Sigmoid colon (tissue), 7 donors: ENCODE measurements at regions of chr16 and their contacts with region 1.

Region 1: DNA sequence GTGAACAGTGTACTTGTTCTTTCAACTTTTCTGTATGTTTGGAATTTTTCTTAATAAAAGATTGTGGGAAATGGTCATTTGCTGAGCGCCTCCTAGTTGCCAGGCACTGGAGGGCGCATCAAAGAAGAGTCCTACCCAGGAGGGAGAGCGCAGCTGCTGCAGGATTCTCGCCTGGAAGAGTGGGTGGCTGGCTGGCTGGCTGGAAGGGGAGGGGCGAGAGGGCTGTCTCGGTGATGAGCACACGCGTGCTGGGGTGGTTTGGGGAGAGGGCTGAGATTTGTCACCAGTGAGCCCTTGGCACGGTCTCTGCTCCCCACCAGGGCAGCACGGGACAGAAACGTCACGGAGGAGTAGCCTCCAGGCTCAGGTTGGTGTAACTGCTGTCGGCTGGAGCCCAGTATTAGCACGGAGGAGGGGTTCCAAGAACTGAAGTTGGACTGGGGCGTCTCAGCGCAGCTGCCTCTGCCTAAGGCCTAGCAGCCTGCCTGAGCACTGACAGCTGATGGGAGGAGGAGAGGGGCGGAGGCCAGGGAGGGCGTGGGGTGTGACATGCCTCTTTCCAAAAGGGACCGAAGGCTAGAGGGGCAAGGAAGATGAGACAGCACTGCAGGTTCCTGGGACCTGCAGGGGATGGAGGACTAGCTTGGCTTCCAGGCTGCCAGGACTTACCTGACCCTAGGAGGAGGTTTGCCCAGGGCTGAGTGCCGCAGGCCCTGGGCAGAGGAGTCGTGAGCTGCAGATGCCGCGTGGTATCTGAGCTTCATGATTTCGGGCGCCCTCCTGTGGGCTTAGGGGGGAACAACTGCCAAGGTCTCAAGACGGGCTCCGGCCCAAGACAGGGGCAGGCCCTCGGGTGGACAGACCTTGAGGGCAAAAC is 5.7 kb downstream of the LDHD start:
- DNase-seq: peak; percentile 96
- H3K4me3 ChIP-seq: peak overlapping the region in 3 of 4 donors; percentile 19 to 37 (median 36)
- H3K27ac ChIP-seq: peak overlapping the region; percentile 77 to 92 (median 88)
- H3K4me1 ChIP-seq: peaks cover 0 to 78% (median 64%) of the 10 kb centered on the region in 4 donors
- H3K27me3 ChIP-seq: no peaks in the 10 kb centered on the region
- CTCF ChIP-seq: peak; percentile 86 to 93 (median 89)
- EP300 ChIP-seq: peak in 1 of 4 donors; percentile 14
- POLR2A ChIP-seq: no peak

Region 2: GRCh38 chr16:74606521-74607310 is 504.2 kb before region 1 on chr16 and contains the start of gene GLG1:
- intact Hi-C with region 1: loop called (anchors 10 kb)
- DNase-seq: peak; percentile 94
- H3K4me3 ChIP-seq: peak within 1 kb of the TSS; percentile 77 to 99 (median 84)
- H3K27ac ChIP-seq: peak within 1 kb of the TSS; percentile 93 to 99 (median 96)
- H3K4me1 ChIP-seq: peaks cover 0 to 36% (median 33%) of the 10 kb centered on the region in 4 donors
- H3K27me3 ChIP-seq: no peaks in the 10 kb centered on the region
- CTCF ChIP-seq: no peak
- EP300 ChIP-seq: no peak
- POLR2A ChIP-seq: peak; percentile 80 to 86
- total RNA-seq, gene GLG1: 78.7 to 138 (median 98.3) TPM

Region 3: DNA sequence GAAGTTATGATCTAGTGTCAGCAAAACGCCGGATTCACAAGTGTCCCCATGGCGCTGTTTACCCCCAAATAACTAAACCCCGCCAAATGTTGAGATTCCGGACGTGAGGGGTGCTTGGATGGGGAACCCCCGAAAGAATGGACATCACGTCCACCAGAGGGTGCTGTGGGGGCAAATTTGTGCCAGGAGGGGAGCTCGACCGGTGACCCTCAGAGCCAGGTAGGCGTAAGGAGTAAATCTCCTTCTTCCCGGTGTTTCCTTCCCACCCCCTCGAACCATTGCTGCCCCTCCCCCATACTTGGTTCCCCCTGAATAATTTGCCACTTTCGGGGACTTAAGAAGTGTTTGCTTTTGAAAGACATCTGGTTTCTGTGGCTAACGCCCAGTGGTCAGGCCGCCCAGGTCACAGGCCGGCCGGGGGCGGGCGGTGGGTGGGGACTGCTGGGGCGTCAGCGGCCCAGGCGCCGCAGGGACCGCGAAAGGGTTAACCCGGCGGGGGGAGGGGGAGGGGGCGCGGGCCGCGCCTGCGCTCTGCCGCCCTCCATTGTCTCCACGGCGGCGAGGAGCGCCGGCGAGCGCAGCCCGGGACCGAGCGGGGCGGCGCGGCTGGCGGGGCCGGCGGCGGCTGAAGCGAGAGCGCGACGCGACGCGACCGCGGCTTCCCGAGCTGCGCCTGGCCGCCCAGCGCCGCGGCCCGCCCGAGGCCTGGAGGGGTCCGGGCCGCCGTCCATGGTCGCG is 112.2 kb before region 1 on chr16 and contains the start of gene ZNRF1:
- intact Hi-C with region 1: loop called (anchors 1 kb)
- DNase-seq: peak; percentile 92
- H3K4me3 ChIP-seq: peak within 1 kb of the TSS; percentile 84 to 99 (median 93)
- H3K27ac ChIP-seq: peak within 1 kb of the TSS; percentile 84 to 93 (median 92)
- H3K4me1 ChIP-seq: peaks cover 0 to 43% (median 21%) of the 10 kb centered on the region in 4 donors
- H3K27me3 ChIP-seq: no peaks in the 10 kb centered on the region
- CTCF ChIP-seq: peak; percentile 77 to 93 (median 86)
- EP300 ChIP-seq: no peak
- POLR2A ChIP-seq: no peak
- total RNA-seq, gene ZNRF1: 16.9 to 33.0 (median 22.3) TPM

Region 4: GRCh38 chr16:75043175-75043895 is 67.5 kb before region 1 on chr16:
- intact Hi-C with region 1: loop called (anchors 10 kb)
- DNase-seq: no peak
- H3K4me3 ChIP-seq: no peak overlapping the region
- H3K27ac ChIP-seq: peak overlapping the region; percentile 64 to 78 (median 70)
- H3K4me1 ChIP-seq: peaks cover 0 to 62% (median 53%) of the 10 kb centered on the region in 4 donors
- H3K27me3 ChIP-seq: no peaks in the 10 kb centered on the region
- CTCF ChIP-seq: no peak
- EP300 ChIP-seq: no peak
- POLR2A ChIP-seq: no peak

Region 5: GRCh38 chr16:75432828-75433731 is 322.2 kb after region 1 on chr16 and contains the start of gene CFDP1:
- intact Hi-C with region 1: loop called (anchors 1 kb)
- DNase-seq: peak; percentile 98
- H3K4me3 ChIP-seq: peak within 1 kb of the TSS; percentile 75 to 92 (median 84)
- H3K27ac ChIP-seq: peak within 1 kb of the TSS; percentile 95 to 98 (median 96)
- H3K4me1 ChIP-seq: peaks cover 0 to 17% (median 11%) of the 10 kb centered on the region in 4 donors
- H3K27me3 ChIP-seq: no peaks in the 10 kb centered on the region
- CTCF ChIP-seq: no peak
- EP300 ChIP-seq: no peak
- POLR2A ChIP-seq: peak; percentile 55 to 64
- total RNA-seq, gene CFDP1: 42.1 to 61.1 (median 48.2) TPM